HEK293 (cell line): ENCODE measurements at regions of chr3 and their contacts with region 1.

Region 1: GRCh38 chr3:17841190-17841828 is 98.9 kb upstream of the TBC1D5 start:
- H3K4me3 ChIP-seq: no peak overlapping the region
- H3K27ac ChIP-seq: no peak overlapping the region
- H3K4me1 ChIP-seq: no peaks in the 10 kb centered on the region
- CTCF ChIP-seq: peak; percentile 92

Region 2: GRCh38 chr3:17258823-17259436 is 582.4 kb before region 1 on chr3:
- CTCF ChIA-PET with region 1: interaction called, 12 read pairs
- POLR2A ChIA-PET with region 1: no interaction called
- H3K4me3 ChIP-seq: no peak overlapping the region
- H3K27ac ChIP-seq: no peak overlapping the region
- H3K4me1 ChIP-seq: no peaks in the 10 kb centered on the region
- CTCF ChIP-seq: no peak

Region 3: DNA sequence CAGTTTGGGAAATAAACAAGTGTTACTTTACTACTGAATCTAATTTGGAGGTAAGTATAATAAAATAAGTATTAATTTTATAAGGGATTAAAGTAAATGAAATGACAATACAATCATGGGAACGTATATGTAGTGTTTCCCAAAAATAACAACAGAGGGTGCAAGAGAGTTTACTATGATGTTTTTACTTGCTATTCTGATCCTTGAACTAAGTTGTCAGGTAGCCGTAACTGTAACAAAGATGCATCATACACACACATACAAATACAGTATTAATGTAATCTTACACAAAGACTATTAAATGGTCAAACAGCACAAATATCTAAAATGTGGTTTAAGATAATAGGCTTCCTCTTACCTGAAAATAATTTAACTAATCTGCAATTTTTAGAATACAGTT is 410.3 kb before region 1 on chr3:
- CTCF ChIA-PET with region 1: interaction called, 45 read pairs
- POLR2A ChIA-PET with region 1: no interaction called
- H3K4me3 ChIP-seq: no peak overlapping the region
- H3K27ac ChIP-seq: no peak overlapping the region
- H3K4me1 ChIP-seq: no peaks in the 10 kb centered on the region
- CTCF ChIP-seq: no peak

Region 4: DNA sequence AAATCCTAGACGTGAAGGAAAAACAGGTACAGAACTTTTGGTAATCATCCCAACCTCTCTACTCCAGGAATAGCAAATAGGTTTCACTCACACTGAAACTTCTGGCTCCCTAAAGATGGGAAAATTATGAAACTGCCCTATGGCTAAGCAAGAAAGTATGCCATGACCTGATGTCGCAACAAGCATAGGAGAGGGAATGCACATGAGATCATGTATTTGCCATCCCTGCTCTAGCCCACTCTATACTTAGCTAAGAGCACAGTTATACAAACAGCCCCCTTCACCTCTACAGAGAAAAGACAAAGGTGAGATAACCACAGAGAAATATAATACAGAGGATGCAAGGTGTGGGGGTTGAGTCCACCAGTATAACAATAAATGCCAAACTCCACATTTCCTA is 201.5 kb before region 1 on chr3:
- CTCF ChIA-PET with region 1: interaction called, 72 read pairs
- POLR2A ChIA-PET with region 1: no interaction called
- H3K4me3 ChIP-seq: no peak overlapping the region
- H3K27ac ChIP-seq: no peak overlapping the region
- H3K4me1 ChIP-seq: peaks cover 4% of the 10 kb centered on the region
- CTCF ChIP-seq: no peak

Region 5: GRCh38 chr3:17742108-17742879 is 99.0 kb before region 1 on chr3 and contains the start of gene TBC1D5:
- CTCF ChIA-PET with region 1: interaction called, 12 read pairs
- POLR2A ChIA-PET with region 1: interaction called, 3 read pairs
- H3K4me3 ChIP-seq: peak within 1 kb of the TSS; percentile 71
- H3K27ac ChIP-seq: peak within 1 kb of the TSS; percentile 100
- H3K4me1 ChIP-seq: peaks cover 12% of the 10 kb centered on the region; the same call in 1 of the 2 replicates
- CTCF ChIP-seq: peak; percentile 77

Region 6: DNA sequence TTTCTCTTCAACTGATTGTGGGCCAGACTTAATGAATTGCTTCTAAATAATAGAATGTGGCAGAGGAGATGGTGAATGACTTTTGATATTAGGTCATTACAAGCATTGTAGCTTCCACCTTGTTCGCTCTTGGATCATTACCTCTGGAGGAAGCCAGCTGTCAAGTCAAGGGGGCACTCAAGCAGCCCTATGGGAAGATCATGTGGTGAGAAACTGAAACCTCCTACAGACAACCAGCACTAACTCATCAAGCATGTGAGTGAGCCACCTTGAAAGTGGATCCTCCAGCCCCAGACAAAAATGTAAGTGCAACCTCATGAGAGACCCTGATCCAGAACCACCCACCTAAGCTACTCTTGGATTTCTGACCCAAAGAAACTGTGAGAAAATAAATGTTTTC is 10.9 kb after region 1 on chr3:
- CTCF ChIA-PET with region 1: interaction called, 12 read pairs
- POLR2A ChIA-PET with region 1: no interaction called
- H3K4me3 ChIP-seq: no peak overlapping the region
- H3K27ac ChIP-seq: no peak overlapping the region
- H3K4me1 ChIP-seq: no peaks in the 10 kb centered on the region
- CTCF ChIP-seq: no peak